T-cell (primary cell): ENCODE measurements at regions of chr11 and their contacts with region 1.

Region 1: DNA sequence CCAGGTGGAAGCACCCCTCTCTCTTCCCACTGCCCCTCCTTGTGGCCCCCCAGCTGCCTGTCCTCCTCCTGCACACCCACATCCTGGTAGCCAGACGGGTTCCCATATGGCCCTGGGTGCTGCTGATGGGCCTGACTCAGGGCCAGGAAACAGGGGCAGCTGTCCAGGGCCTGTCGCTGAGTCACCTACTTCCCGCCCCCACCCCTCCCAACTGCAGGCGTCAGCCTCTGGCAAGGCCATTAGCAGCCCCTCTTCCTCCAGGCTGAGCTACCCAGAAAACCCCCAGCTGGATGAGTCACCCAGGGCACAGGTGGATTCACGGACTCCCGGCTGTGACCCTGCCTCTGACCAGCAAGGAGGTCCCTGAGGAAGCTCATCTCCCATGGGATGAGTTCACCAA is 6.9 kb upstream of the GAL start:
- DNase-seq: no peak
- ATAC-seq: no peak
- H3K4me3 ChIP-seq: no peak overlapping the region
- H3K4me3 Mint-ChIP-seq: no peak overlapping the region
- H3K27ac ChIP-seq: no peak overlapping the region
- H3K27ac Mint-ChIP-seq: no peak overlapping the region
- H3K4me1 ChIP-seq: no peaks in the 10 kb centered on the region
- H3K4me1 Mint-ChIP-seq: no peaks in the 10 kb centered on the region
- H3K27me3 ChIP-seq: peaks cover 0 to 29% of the 10 kb centered on the region in 2 experiments
- H3K27me3 Mint-ChIP-seq: peaks cover 0 to 7% of the 10 kb centered on the region in 2 donors

Region 2: DNA sequence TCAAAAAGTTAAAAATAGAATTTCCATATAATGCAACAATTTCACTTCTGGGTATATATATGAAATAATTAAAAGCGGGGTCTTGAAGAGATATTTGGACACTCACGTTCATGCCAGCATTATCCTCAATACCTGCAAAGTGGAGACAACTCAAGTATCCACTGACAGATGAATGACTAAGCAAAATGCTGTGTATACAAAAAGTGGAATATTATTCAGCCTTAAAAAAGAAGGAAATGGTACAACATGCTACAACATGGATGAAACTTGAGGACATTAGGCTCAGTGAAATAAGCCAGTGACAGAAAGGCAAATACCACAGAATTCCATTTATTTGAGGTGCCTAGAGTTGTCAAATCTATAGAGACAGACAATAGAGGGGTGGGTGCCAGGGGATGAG is 55.6 kb before region 1 on chr11:
- CTCF ChIA-PET with region 1: no interaction called
- POLR2A ChIA-PET with region 1: no interaction called
- DNase-seq: no peak
- ATAC-seq: no peak
- H3K4me3 ChIP-seq: no peak overlapping the region
- H3K4me3 Mint-ChIP-seq: no peak overlapping the region
- H3K27ac ChIP-seq: no peak overlapping the region
- H3K27ac Mint-ChIP-seq: no peak overlapping the region
- H3K4me1 ChIP-seq: no peaks in the 10 kb centered on the region
- H3K4me1 Mint-ChIP-seq: no peaks in the 10 kb centered on the region
- H3K27me3 ChIP-seq: peaks cover 0 to 3% of the 10 kb centered on the region in 2 experiments
- H3K27me3 Mint-ChIP-seq: peaks cover 1 to 8% of the 10 kb centered on the region in 2 donors

Region 3: GRCh38 chr11:68751004-68751856 is 73.8 kb after region 1 on chr11 and contains the start of gene TESMIN:
- CTCF ChIA-PET with region 1: no interaction called
- POLR2A ChIA-PET with region 1: interaction called in 1 of 2 experiments, 11 read pairs
- DNase-seq: peak; percentile 67 to 93 (median 87)
- ATAC-seq: peak; percentile 88 to 98 (median 92)
- H3K4me3 ChIP-seq: peak within 1 kb of the TSS; percentile 10 to 28
- H3K4me3 Mint-ChIP-seq: peak within 1 kb of the TSS; percentile 69 to 81 (median 72)
- H3K27ac ChIP-seq: no peak within 1 kb of the TSS
- H3K27ac Mint-ChIP-seq: peak within 1 kb of the TSS; percentile 22 to 61
- H3K4me1 ChIP-seq: peaks cover 0 to 11% of the 10 kb centered on the region in 2 experiments
- H3K4me1 Mint-ChIP-seq: peaks cover 0 to 24% (median 17%) of the 10 kb centered on the region in 3 donors
- H3K27me3 ChIP-seq: no peaks in the 10 kb centered on the region
- H3K27me3 Mint-ChIP-seq: no peaks in the 10 kb centered on the region
- total RNA-seq, gene TESMIN: 6.1 to 9.1 (median 7.7) TPM

Region 4: GRCh38 chr11:68839054-68839865 is 161.8 kb after region 1 on chr11:
- CTCF ChIA-PET with region 1: no interaction called
- POLR2A ChIA-PET with region 1: no interaction called
- DNase-seq: peak; percentile 87 to 98 (median 93)
- ATAC-seq: peak; percentile 68 to 77 (median 72)
- H3K4me3 ChIP-seq: peak overlapping the region; percentile 48 to 62
- H3K4me3 Mint-ChIP-seq: peak overlapping the region; percentile 85 to 88 (median 86)
- H3K27ac ChIP-seq: peak overlapping the region; percentile 75
- H3K27ac Mint-ChIP-seq: peak overlapping the region; percentile 89 to 91
- H3K4me1 ChIP-seq: peaks cover 29 to 77% of the 10 kb centered on the region in 2 experiments
- H3K4me1 Mint-ChIP-seq: peaks cover 60 to 71% (median 64%) of the 10 kb centered on the region in 3 donors
- H3K27me3 ChIP-seq: peaks cover 0 to 4% of the 10 kb centered on the region in 2 experiments
- H3K27me3 Mint-ChIP-seq: no peaks in the 10 kb centered on the region